Activated CD4-positive, alpha-beta T cell treated with anti-CD3 and anti-CD28 coated beads, Interleukin-2, amount 10 ng/mL, durations not matched to agents 24 days and 14 days (primary cell): ENCODE measurements at regions of chr3 and their contacts with region 1.

Region 1: DNA sequence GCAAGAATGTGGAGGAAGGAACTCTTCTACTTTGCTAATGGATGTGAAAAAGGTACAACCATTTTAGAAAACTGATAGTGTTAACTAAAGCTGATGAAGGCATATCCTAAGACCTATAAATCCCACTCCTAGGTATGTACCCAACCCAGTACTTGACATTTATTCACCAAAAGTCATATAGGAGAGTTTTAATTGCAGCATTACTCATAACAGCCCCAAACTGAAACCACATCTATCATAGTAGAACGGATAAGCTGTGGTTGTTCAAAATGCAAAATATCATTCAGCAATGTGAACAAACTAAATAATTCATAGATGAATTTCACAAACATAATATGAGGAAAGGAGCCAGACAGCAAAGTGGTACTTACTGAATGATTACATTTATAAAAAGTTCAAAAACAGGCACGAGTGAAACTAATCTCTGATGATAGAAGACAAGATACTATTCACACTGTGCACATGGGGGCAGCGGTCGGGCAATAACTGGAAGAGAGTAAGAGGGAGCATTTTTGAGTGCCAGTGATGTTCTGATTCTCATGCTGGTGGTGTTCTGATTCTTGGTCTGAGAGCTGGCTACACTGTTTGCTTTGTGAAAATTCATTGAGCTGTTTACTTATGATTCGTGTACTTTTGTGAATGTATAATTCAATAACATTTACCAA is 34.3 kb downstream of the GOLIM4 start:
- DNase-seq: no peak
- H3K4me3 Mint-ChIP-seq: peak overlapping the region; percentile 29
- H3K27ac Mint-ChIP-seq: no peak overlapping the region
- H3K4me1 Mint-ChIP-seq: peaks cover 7% of the 10 kb centered on the region
- H3K27me3 Mint-ChIP-seq: peaks cover 2% of the 10 kb centered on the region

Region 2: GRCh38 chr3:167644611-167645010 is 416.9 kb before region 1 on chr3:
- intact Hi-C with region 1: no loop called
- DNase-seq: no peak
- H3K4me3 Mint-ChIP-seq: no peak overlapping the region
- H3K27ac Mint-ChIP-seq: no peak overlapping the region
- H3K4me1 Mint-ChIP-seq: no peaks in the 10 kb centered on the region
- H3K27me3 Mint-ChIP-seq: no peaks in the 10 kb centered on the region

Region 3: DNA sequence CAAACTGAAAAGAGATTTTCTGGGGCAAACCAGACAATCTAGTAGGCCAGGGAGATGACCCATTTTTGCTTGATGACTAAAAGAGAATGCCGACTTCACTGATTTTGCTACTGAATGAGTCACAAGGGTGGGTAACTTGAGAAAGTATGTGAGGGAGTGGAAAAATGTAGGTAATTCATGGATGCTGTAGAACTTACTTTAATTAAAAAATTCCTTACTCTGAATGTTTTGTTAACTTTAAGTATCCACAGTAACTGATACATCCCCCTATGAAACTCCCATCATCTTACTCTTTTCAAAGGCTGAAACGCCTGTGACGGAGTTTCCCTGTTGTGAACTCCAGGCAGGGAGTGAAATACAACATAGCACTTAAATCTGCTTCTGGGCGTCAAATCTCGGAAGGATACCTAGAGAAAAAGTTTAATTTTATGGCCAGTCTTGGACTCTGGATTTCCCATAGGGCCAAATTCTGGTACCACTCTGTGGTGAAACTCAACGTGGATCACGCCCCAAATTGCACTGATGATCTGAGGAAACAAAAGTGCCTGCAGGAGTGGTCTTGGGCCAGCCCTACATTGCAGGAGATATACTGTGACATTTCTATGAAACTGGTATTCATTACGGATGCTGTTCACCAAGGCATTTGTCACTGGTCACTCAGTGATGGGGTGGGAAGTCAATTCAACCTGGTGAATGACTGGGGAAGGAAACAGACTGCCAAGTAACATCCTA is 10.3 kb after region 1 on chr3:
- intact Hi-C with region 1: loop called (anchors 1 kb)
- DNase-seq: no peak
- H3K4me3 Mint-ChIP-seq: no peak overlapping the region
- H3K27ac Mint-ChIP-seq: no peak overlapping the region
- H3K4me1 Mint-ChIP-seq: no peaks in the 10 kb centered on the region
- H3K27me3 Mint-ChIP-seq: peaks cover 2% of the 10 kb centered on the region

Region 4: GRCh38 chr3:168085541-168086115 is 24.2 kb after region 1 on chr3:
- intact Hi-C with region 1: no loop called
- DNase-seq: no peak
- H3K4me3 Mint-ChIP-seq: no peak overlapping the region
- H3K27ac Mint-ChIP-seq: no peak overlapping the region
- H3K4me1 Mint-ChIP-seq: peaks cover 7% of the 10 kb centered on the region
- H3K27me3 Mint-ChIP-seq: peaks cover 8% of the 10 kb centered on the region

Region 5: GRCh38 chr3:168095611-168096209 is 34.2 kb after region 1 on chr3 and contains the start of gene GOLIM4:
- intact Hi-C with region 1: loop called (anchors 1 kb)
- DNase-seq: peak; percentile 86
- H3K4me3 Mint-ChIP-seq: peak within 1 kb of the TSS; percentile 83
- H3K27ac Mint-ChIP-seq: peak within 1 kb of the TSS; percentile 86
- H3K4me1 Mint-ChIP-seq: peaks cover 10% of the 10 kb centered on the region
- H3K27me3 Mint-ChIP-seq: peaks cover 36% of the 10 kb centered on the region
- total RNA-seq, gene GOLIM4: 8.5 and 8.6 TPM in 2 replicates